A549 (cell line): ENCODE measurements at regions of chr21 and their contacts with region 1.

Region 1: DNA sequence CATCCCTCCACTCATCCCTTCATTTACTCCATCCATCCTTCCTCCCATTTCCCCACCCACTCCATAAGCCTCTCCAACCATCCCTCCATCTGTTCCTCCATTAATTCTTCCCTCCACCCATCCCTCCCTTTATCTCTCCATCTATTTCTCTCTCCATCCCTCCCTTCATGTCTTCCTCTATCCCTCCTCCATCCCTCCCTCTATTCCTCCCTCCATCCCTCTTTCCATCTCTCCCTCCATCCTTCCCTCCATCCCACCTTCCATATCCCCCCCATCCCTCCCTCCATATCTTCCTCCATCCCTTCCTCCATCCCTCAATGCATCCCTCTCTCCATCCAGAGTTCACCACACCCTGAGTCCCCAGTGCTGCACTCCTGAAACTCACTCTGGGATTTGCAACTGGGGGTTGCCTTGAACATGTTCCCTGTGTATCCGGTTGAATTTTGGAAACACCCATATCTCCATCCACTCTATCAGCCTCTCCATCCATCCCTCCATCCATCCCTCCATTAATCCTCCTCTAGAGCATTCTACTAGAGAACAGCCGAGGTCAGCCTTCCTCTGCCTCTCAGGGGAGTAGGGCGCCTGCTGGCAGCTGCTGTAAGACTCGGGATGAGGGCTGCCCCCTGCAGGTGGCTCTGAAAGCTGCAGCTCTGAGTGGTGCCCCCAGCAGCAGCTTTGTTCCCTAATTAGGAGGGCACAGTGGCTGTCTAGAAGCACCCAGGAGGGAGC is 39.4 kb downstream of the ABCG1 start:
- DNase-seq: peak; percentile 38 to 60
- ATAC-seq: peak; percentile 83 to 93; a peak in 5 of 6 replicates
- H3K4me3 ChIP-seq: no peak overlapping the region
- H3K27ac ChIP-seq: no peak overlapping the region
- H3K4me1 ChIP-seq: peaks cover 7% of the 10 kb centered on the region; the same call in 1 of the 3 replicates
- CTCF ChIP-seq: peak; percentile 54
- EP300 ChIP-seq: no peak
- POLR2A ChIP-seq: no peak
- RAD21 ChIP-seq: peak; percentile 52 to 58

Region 2: DNA sequence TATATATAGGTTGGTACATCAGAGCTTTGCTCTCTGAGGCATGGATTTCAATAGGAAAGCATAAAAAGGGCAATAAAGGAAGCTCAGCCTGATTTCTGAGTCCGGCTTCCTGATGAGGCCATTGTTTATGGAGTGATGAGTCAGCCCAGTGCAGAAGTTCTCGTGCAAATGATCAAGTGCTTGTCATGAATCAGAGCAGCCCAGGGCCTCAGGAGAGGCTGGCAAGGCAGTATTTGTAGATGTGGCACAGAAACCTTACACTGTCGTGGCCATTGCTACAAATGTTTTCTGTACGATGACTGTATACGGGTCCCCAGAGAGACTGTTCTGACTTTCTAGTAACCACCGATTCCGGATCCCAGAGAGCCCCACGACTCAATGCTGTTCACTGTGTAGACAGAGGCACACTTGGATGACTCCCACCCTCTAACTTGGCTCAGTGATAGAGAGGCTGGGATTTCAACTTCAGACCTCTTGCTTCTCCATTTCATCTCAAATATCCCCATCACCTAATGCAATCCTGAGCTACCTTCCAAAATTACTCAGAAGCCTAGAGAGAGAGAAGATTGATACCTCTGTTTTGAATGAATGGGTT is 160.4 kb before region 1 on chr21:
- CTCF ChIA-PET with region 1: no interaction called
- POLR2A ChIA-PET with region 1: no interaction called
- DNase-seq: peak; percentile 84
- ATAC-seq: peak; percentile 96 to 98
- H3K4me3 ChIP-seq: no peak overlapping the region
- H3K27ac ChIP-seq: peak overlapping the region; percentile 71 to 75
- H3K4me1 ChIP-seq: peaks cover 11% of the 10 kb centered on the region
- CTCF ChIP-seq: no peak
- EP300 ChIP-seq: no peak
- POLR2A ChIP-seq: no peak
- RAD21 ChIP-seq: no peak

Region 3: DNA sequence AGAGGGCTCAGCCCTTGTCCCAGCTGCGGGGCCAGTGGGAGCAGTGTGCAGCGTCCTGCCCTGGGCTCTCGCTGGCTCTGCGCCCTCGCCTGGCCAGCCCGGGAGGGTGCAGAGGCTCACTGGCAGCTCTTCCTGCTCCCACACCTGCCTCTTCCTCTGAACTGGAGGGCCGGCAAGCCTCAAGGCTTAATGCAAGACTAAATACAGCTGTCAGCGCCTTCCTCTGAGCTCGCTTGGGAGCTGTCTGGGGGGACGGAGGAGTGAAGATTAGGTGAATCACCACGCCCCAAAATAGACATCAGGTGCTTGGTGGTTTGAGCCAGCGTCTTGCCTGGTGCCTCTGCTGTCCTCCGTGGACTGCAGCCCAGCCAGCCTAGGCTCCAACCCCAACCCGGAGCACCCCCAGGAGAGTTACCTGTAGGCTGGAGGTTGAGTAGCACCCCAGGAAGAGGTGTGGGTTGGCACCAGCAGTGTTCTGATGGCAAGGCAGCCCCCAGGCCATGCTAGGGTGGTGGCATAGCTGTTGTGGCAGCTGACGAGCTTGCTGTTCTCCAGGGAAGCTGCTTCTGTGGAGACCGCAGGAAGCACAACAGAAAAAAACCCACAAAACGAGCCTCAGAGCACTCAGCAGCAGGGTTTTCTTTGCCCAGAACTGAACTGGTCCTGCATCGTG is 150.3 kb before region 1 on chr21:
- CTCF ChIA-PET with region 1: no interaction called
- POLR2A ChIA-PET with region 1: no interaction called
- DNase-seq: peak; percentile 51 to 76
- ATAC-seq: peak; percentile 96 to 99
- H3K4me3 ChIP-seq: no peak overlapping the region
- H3K27ac ChIP-seq: no peak overlapping the region
- H3K4me1 ChIP-seq: no peaks in the 10 kb centered on the region
- CTCF ChIP-seq: peak; percentile 50
- EP300 ChIP-seq: no peak
- POLR2A ChIP-seq: no peak
- RAD21 ChIP-seq: peak; percentile 61 to 64

Region 4: DNA sequence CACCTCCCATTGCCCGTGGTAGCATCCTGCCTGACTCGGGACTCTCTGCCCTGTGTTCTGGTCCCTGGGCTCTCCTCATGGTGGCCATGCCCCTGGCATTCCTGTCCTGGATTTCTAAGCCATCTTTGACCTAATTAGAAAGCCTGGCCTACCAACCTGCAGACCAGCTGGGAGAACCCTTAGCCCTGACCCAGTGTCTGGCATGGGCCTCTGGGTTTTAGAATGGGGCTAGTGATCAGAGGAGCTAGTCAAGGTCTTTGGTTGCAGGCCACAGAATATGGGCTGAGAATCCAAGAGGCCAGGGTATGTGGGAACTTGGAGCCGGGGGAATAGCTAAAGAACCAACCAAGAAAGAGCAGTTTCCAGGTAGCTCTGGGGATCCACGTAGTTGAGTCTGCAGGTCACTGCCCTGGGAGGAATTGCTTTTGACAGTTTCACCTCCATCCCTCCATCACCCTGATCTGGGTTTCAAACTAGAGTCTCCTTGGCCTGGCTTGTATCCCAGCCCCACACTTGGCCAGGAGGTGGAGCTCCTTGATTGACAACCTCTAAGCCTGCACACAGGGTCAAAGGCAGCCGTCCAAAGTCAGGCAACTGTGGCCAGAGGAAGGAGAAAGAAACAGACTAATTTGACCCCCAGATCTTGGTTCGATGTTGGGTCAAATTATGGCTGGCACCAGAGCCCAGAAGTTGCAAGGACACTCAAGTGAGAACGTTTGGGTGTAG is 94.1 kb before region 1 on chr21:
- CTCF ChIA-PET with region 1: interaction called, 13 read pairs
- POLR2A ChIA-PET with region 1: no interaction called
- DNase-seq: peak in 1 of 2 experiments; percentile 24
- ATAC-seq: peak; percentile 81 to 85; a peak in 5 of 6 replicates
- H3K4me3 ChIP-seq: no peak overlapping the region
- H3K27ac ChIP-seq: no peak overlapping the region
- H3K4me1 ChIP-seq: no peaks in the 10 kb centered on the region
- CTCF ChIP-seq: peak; percentile 42
- EP300 ChIP-seq: no peak
- POLR2A ChIP-seq: no peak
- RAD21 ChIP-seq: peak; percentile 60 to 68

Region 5: DNA sequence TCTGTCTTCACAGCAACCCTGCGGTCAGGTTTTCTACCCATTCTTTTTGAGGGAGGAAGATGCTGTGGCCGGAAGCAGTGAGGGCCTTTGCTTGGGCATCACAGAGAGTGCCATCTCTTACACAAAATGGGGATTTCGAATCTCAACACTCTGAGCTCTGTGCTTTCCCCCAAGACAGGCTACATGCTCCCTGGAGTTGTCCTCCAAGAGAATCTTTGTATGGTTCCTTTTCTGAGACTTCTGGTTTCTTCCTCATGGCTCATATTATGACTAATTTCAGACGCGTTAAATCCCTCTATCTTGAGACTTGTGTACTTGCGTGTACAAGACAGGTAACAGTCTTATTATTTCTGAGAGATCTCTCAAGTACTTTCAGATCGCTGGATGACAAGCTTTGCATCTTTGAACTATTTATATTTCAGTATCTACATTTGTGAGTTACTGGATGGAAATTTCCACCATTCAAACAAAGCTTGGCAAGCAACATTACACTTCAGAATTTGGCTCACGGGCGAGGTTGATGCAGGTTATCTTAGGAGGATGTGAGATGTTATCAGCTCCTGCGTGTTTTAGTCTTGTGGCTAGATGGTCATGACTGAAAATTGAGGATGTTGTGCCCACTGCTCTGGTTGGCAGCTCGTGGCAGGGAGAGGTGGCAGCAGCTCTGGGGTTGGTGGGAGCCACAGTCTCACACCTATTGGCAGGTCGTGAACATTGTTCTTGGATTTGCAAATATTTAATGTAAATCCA is 20.0 kb before region 1 on chr21:
- CTCF ChIA-PET with region 1: interaction called, 12 read pairs
- POLR2A ChIA-PET with region 1: no interaction called
- DNase-seq: no peak
- ATAC-seq: no peak
- H3K4me3 ChIP-seq: no peak overlapping the region
- H3K27ac ChIP-seq: no peak overlapping the region
- H3K4me1 ChIP-seq: peaks cover 16% of the 10 kb centered on the region
- CTCF ChIP-seq: no peak
- EP300 ChIP-seq: no peak
- POLR2A ChIP-seq: no peak
- RAD21 ChIP-seq: no peak